Lower leg skin (tissue), 4 donors: ENCODE measurements at regions of chr7 and their contacts with region 1.

Region 1: DNA sequence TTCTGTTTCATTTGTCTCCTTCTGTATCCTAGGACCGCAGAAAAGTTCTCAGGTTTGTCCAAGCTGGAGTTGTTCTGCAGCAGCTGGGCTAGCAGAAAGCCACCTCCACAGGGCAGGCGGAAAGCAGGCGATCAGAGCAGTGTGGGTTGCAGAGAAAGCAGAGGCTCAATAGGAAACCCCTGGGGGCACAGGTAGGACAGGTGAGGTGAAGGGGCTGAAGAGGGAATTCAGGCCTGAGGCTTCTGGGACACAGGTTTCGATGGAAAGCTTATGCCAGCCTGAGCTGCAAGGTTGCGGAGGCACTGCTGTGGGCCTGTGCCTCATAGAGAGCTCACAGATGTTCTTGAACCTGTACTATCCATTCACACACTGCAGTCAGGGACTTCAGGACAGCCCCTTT is 194.9 kb upstream of the TPK1 start:
- DNase-seq: no peak
- H3K4me3 ChIP-seq: no peak overlapping the region
- CTCF ChIP-seq: no peak
- POLR2A ChIP-seq: no peak

Region 2: GRCh38 chr7:144384071-144384470 is 646.7 kb before region 1 on chr7:
- intact Hi-C with region 1: no loop called
- DNase-seq: peak in 1 of 2 donors; percentile 20
- H3K4me3 ChIP-seq: no peak overlapping the region
- CTCF ChIP-seq: no peak
- POLR2A ChIP-seq: no peak

Region 3: GRCh38 chr7:144960763-144961162 is 70.0 kb before region 1 on chr7:
- intact Hi-C with region 1: no loop called
- DNase-seq: no peak
- H3K4me3 ChIP-seq: no peak overlapping the region
- CTCF ChIP-seq: no peak
- POLR2A ChIP-seq: no peak

Region 4: DNA sequence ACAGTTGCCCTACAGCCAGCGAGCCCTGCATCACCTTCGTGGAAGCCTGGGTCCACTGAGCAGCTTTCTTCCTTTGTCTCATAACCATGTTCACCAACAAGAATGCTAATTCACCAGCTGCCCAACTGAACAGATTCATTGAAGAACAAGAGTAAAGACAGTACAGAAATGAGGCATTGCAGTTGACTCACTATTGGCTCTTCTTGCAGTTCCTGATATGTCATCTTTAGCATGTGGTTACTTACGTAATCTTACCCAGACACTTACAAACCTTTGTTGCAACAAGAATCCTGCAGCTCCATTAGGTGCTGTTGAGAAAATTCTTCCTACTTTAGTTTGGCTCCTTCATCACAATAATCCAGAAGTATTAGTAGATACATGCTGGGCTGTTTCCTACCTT is 20.9 kb before region 1 on chr7:
- intact Hi-C with region 1: no loop called
- DNase-seq: no peak
- H3K4me3 ChIP-seq: no peak overlapping the region
- CTCF ChIP-seq: no peak
- POLR2A ChIP-seq: no peak

Region 5: GRCh38 chr7:145411066-145411465 is 380.3 kb after region 1 on chr7:
- intact Hi-C with region 1: no loop called
- DNase-seq: no peak
- H3K4me3 ChIP-seq: no peak overlapping the region
- CTCF ChIP-seq: no peak
- POLR2A ChIP-seq: no peak

Region 6: GRCh38 chr7:146214842-146215241 is 1184.1 kb after region 1 on chr7:
- intact Hi-C with region 1: loop called (anchors 5 kb)
- DNase-seq: no peak
- H3K4me3 ChIP-seq: no peak overlapping the region
- CTCF ChIP-seq: no peak
- POLR2A ChIP-seq: no peak